ENCODE measurements at regions of chr16 and their contacts with region 1.

Region 1: DNA sequence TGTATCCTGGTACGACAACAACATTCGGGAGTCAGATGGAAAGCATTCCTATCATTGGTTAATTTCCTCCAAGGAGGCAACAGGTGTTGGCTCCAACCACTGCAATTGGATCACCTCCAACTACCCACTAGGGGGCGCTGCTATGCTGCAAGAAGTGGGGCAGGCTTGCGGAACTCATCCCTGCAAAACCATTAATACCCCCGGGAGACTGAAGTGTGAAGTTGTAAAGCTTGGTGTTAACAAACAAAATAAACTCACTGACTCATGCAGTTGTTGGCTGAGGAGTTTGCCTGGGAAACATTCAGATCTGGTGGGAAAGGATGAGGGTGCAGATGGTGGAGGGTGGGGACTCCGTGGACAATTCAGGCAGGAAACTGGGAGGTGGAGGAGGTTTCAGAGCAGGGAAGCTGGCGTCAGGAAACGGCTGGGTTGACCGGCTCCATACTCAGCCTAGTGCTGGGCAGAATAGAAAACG is 84.9 kb downstream of the HS3ST2 start:
- DNase-seq: peak; percentile 77
- ATAC-seq: peak; percentile 85

Region 2: DNA sequence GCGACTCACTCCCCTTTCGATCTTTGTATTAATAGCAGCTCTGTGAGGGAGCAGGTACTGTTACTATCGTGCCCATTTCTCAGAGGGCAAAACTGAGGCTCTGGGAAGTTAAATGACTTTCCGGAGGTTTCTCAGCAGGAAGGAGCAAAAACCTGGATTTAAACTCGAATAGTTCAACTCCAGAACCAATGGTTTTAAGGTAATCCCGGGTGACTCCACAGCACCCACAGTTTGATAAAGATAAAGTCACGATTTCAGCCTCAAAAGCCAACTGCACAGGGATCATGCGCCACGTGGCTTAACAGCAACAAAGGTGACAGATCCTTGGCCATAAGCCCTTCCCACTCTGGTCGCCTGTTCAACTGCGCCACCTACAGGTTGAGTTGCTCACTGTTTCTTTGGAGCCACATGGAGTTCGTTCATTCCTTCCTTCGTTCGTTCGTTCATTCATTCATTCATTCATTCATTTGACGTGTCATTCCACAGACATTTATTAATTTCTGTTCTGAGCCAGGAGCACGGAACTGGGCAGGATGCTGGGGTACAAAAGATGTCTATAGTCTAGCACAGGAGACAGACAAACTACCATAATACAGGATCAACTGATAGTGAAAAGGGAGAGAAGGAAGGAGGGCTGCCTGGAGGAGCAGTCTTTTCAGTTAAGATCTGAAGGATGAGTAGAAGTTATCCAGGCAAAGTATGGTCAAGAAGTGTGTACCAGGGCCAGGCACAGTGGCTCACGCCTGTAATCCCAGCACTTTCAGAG is 49.9 kb after region 1 on chr16:
- intact Hi-C with region 1: loop called (anchors 5 kb)
- DNase-seq: peak; percentile 64
- ATAC-seq: peak; percentile 87

Region 3: DNA sequence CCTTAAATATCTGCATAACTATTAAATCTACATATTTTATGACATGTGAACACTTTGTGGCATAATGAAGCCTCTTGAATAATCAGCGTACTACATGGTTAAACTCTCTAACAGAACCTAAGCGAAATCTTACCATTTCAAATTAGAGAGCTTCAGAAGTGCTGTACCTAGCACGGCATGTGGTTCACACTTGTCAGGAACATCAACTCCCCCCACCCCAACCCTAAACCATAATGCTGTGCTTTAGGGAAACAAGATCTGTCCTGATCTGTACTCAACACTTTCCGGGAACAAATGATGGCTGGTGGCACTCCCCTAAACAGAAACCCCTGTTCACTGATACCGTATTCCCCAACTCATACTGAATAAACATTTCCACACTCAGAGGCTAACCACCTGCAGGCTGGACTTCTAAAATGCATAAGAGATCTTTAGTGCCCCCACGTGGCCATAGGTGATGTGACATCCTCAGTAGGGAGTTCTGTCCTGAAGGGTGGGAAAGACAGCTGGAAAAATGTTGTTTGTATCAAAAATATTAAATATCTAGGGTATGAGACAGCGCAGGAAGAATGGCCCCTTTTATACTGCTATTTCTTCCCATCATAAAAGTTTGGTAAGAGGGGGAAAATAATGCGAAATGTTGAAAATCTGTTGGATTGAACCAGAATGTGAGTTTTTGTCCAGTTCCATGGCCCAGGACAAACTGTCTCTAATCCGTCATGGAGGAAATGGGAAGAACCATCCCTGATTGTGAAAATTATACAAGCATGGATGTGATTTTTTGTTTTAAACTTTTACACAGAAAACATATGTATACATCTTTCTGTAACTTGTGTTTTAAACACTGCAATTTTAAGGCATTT is 161.8 kb after region 1 on chr16:
- intact Hi-C with region 1: loop called (anchors 10 kb)
- DNase-seq: peak; percentile 58
- ATAC-seq: peak; percentile 85